ENCODE measurements at regions of chr4 and their contacts with region 1.

Region 1: DNA sequence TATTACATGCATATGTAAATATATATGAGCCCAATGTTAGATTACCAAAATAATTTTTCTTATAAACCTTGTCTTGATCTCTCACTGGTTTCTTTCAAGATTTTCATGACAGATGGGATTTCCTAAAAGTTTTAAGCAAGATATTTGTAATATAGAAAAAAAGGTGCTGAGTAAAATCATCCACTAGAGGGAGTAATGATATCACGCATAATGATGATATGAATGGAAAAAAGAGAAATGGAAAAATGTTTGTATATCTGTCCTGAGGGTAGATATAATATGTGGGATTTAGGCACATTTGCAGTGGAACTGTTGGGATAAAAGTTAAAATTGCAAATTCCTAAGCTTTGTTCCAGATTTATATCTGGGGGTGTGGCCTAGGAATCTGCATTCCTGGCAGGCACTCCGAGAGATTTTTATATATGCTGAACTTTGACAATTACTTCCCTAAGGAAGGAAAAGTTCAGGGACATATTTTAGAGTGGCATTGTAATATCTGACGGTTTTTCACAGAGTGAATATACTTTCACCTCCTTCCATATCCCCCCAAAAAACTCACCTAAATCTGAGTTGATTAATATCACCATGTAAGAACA is 60.5 kb downstream of the TMA16 start:
- DNase-seq: no peak
- H3K4me3 Mint-ChIP-seq: no peak overlapping the region
- H3K27ac Mint-ChIP-seq: no peak overlapping the region
- H3K4me1 Mint-ChIP-seq: no peaks in the 10 kb centered on the region
- H3K27me3 Mint-ChIP-seq: no peaks in the 10 kb centered on the region
- CTCF ChIP-seq: no peak

Region 2: DNA sequence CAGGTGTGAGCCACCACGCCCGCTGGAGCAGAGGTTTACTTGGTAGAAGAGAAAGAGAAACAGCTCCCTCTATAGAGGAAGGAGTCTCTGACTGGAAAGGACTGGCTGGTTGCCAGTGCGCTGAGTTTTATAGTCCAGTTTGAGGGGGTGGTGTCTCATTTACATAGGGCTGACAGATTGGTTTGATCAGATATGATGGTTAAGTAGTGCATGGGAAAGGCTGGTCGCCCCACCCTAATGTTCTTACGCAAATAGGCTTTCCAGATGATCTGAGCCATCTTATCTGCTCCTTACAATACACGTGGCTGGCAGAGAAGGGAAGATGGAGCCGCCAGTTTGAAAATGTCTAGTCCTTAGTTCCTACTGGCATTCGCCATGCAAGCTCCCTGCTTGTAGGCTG is 827.7 kb before region 1 on chr4:
- CTCF ChIA-PET with region 1: no interaction called
- intact Hi-C with region 1: no loop called
- DNase-seq: no peak
- H3K4me3 Mint-ChIP-seq: no peak overlapping the region
- H3K27ac Mint-ChIP-seq: no peak overlapping the region
- H3K4me1 Mint-ChIP-seq: no peaks in the 10 kb centered on the region
- H3K27me3 Mint-ChIP-seq: no peaks in the 10 kb centered on the region
- CTCF ChIP-seq: no peak

Region 3: DNA sequence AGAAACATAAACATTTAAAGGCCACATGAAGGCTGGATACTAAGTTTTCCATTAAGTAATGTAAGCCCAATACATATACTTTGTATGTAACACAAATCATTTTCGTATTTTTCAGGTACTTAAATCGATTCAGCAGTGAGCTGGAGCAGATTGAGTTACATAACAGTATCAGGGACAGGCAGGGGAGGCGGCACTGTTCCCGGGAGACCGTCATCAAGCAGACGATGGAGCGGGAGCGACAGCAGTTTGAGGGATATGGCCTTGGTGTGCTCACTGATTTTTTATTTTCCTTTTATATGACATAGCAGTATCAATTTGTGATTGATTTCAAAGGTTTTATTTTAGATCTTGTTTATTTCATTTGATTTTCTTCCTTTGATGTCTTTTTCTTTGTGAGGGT is 39.8 kb before region 1 on chr4:
- CTCF ChIA-PET with region 1: no interaction called
- intact Hi-C with region 1: no loop called
- DNase-seq: no peak
- H3K4me3 Mint-ChIP-seq: no peak overlapping the region
- H3K27ac Mint-ChIP-seq: peak overlapping the region; percentile 50
- H3K4me1 Mint-ChIP-seq: no peaks in the 10 kb centered on the region
- H3K27me3 Mint-ChIP-seq: no peaks in the 10 kb centered on the region
- CTCF ChIP-seq: no peak

Region 4: DNA sequence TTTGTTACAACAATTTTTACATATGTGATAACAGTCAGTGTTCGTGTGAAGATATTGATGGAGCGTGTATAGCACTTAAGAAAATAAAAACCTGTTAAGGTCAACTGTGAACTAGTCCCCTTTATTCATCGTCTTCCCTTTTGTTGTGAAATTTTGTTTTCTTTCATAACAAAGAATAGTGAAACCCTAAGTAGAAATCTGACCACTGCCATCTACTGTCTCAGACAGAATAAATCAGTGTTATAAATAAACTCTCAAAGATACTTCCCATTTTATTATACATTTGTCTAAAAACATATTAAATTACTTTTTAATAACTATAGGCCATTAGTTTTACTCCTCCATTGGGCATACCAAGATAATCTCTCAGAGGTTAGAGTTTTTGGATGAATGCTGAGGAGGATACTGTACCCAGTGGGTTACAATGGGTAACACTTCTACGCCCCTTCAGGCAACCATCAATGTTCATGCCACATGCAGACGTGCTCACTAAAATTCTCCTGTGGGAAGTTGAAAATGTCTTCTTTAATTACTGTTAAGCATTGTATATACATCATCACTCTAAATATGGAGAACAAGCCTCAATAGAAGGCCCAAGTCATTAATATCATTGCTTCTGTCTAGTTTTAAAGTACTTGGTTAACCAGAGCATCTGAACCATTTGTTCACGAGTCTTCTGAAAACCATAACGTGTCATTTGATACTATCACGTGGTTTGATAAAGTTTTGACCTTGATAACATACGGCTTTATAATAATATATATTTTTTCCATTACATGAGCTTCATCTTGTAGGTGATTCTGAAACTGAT is 110.8 kb after region 1 on chr4:
- CTCF ChIA-PET with region 1: no interaction called
- intact Hi-C with region 1: loop called (anchors 1 kb)
- DNase-seq: no peak
- H3K4me3 Mint-ChIP-seq: no peak overlapping the region
- H3K27ac Mint-ChIP-seq: no peak overlapping the region
- H3K4me1 Mint-ChIP-seq: no peaks in the 10 kb centered on the region
- H3K27me3 Mint-ChIP-seq: no peaks in the 10 kb centered on the region
- CTCF ChIP-seq: no peak

Region 5: GRCh38 chr4:163681208-163681821 is 126.3 kb after region 1 on chr4:
- CTCF ChIA-PET with region 1: interaction called, 10 read pairs
- intact Hi-C with region 1: loop called (anchors 1 kb)
- DNase-seq: peak; percentile 26
- H3K4me3 Mint-ChIP-seq: no peak overlapping the region
- H3K27ac Mint-ChIP-seq: no peak overlapping the region
- H3K4me1 Mint-ChIP-seq: no peaks in the 10 kb centered on the region
- H3K27me3 Mint-ChIP-seq: no peaks in the 10 kb centered on the region
- CTCF ChIP-seq: peak; percentile 24

Region 6: DNA sequence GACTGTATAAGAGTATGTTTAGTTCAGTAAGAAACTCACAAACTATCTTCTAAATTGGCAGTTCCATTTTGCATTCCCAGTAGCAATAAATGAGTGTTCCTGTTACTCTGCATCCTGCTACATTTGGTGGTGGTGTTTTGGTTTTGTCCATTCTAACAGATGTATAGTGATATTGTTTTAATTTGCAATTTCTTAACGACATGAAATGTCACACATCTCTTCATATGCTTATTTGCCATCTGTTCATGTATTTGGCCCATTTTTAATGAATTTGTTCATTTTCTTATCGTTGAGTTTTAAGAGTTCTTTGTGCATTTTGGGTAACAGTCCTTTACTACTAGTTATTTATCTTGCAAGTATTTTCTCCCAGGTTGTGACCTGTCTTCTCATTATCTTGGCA is 171.7 kb after region 1 on chr4:
- CTCF ChIA-PET with region 1: no interaction called
- intact Hi-C with region 1: no loop called
- DNase-seq: no peak
- H3K4me3 Mint-ChIP-seq: no peak overlapping the region
- H3K27ac Mint-ChIP-seq: no peak overlapping the region
- H3K4me1 Mint-ChIP-seq: no peaks in the 10 kb centered on the region
- H3K27me3 Mint-ChIP-seq: no peaks in the 10 kb centered on the region
- CTCF ChIP-seq: no peak

Region 7: DNA sequence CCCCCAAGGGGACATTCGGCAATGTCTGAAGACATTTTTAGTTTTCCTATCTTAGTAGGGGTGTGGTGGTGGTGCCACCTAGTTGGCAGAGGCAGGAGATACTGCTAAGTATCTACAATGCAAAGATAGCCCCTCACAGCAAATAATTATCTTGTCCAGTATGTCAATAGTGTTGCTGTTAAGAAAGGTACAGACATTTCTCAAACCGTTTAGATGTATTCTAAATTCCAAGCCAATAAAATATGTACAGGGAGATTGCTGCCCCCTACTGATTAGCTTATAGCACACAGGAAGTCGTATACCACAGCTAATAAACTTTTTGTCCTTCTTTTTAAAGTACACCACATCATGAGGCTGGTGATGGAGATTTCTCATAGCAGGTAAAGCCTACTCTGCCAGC is 200.0 kb after region 1 on chr4:
- CTCF ChIA-PET with region 1: interaction called, 4 read pairs
- intact Hi-C with region 1: loop called (anchors 2 kb)
- DNase-seq: no peak
- H3K4me3 Mint-ChIP-seq: no peak overlapping the region
- H3K27ac Mint-ChIP-seq: no peak overlapping the region
- H3K4me1 Mint-ChIP-seq: no peaks in the 10 kb centered on the region
- H3K27me3 Mint-ChIP-seq: no peaks in the 10 kb centered on the region
- CTCF ChIP-seq: peak; percentile 32

Region 8: DNA sequence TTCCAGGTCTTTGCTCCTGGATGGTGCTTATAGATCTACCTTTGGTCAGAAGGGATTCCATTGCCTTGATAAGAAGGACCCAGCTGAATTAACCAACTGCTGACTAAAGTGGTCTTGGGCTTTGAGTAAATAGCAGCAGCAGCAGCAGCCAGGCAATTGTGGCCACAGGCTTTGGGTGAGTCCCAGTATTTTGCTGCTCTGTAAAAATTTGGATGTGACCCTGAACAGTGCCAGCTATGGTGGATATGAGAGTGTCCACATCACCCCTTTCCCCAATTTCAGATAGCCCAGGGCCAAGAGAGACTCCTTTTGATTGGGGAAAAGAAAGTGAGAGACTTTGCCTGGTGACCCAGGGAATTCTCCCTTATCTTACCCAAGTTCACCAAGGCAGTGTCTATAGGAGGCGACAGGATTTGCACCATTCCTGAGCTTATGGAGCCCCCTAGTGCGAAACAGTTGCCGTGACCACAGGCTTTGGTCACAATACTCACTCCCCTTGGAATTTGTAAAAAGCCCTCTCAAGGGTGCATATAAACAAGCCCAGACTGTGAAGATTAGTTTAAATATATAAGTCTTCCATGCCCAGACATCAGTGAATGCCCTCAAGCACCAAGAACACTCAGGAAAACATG is 457.5 kb after region 1 on chr4:
- CTCF ChIA-PET with region 1: interaction called, 3 read pairs
- intact Hi-C with region 1: loop called (anchors 1 kb)
- DNase-seq: peak; percentile 39
- H3K4me3 Mint-ChIP-seq: no peak overlapping the region
- H3K27ac Mint-ChIP-seq: no peak overlapping the region
- H3K4me1 Mint-ChIP-seq: no peaks in the 10 kb centered on the region
- H3K27me3 Mint-ChIP-seq: no peaks in the 10 kb centered on the region
- CTCF ChIP-seq: peak; percentile 35

Region 9: GRCh38 chr4:164320847-164321246 is 765.9 kb after region 1 on chr4:
- CTCF ChIA-PET with region 1: no interaction called
- intact Hi-C with region 1: no loop called
- DNase-seq: no peak
- H3K4me3 Mint-ChIP-seq: no peak overlapping the region
- H3K27ac Mint-ChIP-seq: no peak overlapping the region
- H3K4me1 Mint-ChIP-seq: no peaks in the 10 kb centered on the region
- H3K27me3 Mint-ChIP-seq: no peaks in the 10 kb centered on the region
- CTCF ChIP-seq: no peak

Region 10: DNA sequence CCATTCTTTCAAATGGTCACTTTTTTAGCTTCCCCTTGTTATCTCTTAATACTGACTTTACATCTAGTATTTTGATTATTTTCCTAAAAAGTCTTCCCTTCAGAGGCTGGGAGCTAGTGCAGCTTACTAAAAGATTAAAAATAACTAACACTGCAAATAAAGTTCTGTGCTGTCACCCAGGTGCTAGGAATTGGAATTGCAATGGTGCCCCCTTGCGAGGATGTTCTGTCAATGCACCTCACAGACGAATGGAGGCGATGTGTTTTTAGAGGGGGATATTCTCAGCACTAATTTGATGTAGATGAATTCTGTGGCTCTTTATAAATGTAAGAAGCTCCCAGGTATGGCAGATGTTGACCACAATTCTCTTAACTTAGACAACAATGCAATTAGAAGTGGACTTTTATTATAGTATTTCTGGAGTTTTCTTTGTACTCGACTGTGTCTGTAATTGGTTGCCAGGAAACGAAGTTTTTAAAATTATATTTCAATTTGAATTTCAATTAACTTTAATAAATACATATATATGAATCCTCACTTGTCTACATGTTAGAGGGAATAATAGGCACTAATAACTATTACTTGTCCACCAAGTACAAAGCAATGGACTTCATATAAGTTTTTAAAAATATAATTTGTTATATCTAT is 1177.0 kb after region 1 on chr4:
- CTCF ChIA-PET with region 1: no interaction called
- intact Hi-C with region 1: loop called (anchors 5 kb)
- DNase-seq: peak; percentile 65
- H3K4me3 Mint-ChIP-seq: no peak overlapping the region
- H3K27ac Mint-ChIP-seq: no peak overlapping the region
- H3K4me1 Mint-ChIP-seq: no peaks in the 10 kb centered on the region
- H3K27me3 Mint-ChIP-seq: no peaks in the 10 kb centered on the region
- CTCF ChIP-seq: peak; percentile 53

Region 11: DNA sequence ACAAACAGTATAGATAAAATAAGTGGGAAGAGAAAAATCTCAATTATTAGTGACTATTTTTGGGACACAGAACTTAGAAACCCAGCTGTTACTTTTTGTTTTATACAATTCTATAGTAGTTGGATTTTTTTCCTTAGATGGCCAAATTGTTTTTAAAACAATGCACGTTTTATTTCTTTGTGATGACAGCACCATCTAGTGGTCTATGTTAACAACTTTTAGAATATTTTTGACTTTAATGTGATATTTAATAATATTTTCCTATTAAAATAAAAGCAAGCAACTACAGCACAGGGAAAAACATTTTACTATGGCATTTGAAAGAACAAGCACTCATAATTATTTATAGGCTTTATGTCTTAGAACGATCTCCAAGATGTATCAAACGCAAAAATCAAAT is 1193.4 kb after region 1 on chr4:
- CTCF ChIA-PET with region 1: no interaction called
- intact Hi-C with region 1: loop called (anchors 5 kb)
- DNase-seq: no peak
- H3K4me3 Mint-ChIP-seq: no peak overlapping the region
- H3K27ac Mint-ChIP-seq: no peak overlapping the region
- H3K4me1 Mint-ChIP-seq: no peaks in the 10 kb centered on the region
- H3K27me3 Mint-ChIP-seq: peaks cover 24% of the 10 kb centered on the region
- CTCF ChIP-seq: no peak